Aorta (tissue), 5 donors: ENCODE measurements at regions of chr1 and their contacts with region 1.

Region 1: GRCh38 chr1:220908757-220909156 is 29.5 kb downstream of the HLX start:
- DNase-seq: no peak
- ATAC-seq: no peak
- H3K4me3 ChIP-seq: no peak overlapping the region
- H3K27ac ChIP-seq: no peak overlapping the region
- H3K4me1 ChIP-seq: no peaks in the 10 kb centered on the region
- H3K27me3 ChIP-seq: no peaks in the 10 kb centered on the region

Region 2: GRCh38 chr1:219990782-219991510 is 917.8 kb before region 1 on chr1:
- intact Hi-C with region 1: no loop called
- DNase-seq: no peak
- ATAC-seq: peak; percentile 68
- H3K4me3 ChIP-seq: no peak overlapping the region
- H3K27ac ChIP-seq: no peak overlapping the region
- H3K4me1 ChIP-seq: no peaks in the 10 kb centered on the region
- H3K27me3 ChIP-seq: no peaks in the 10 kb centered on the region

Region 3: GRCh38 chr1:221217029-221217428 is 308.3 kb after region 1 on chr1:
- intact Hi-C with region 1: loop called in 1 of 2 experiments (anchors 10 kb)
- DNase-seq: peak in 1 of 2 donors; percentile 45
- ATAC-seq: peak; percentile 82
- H3K4me3 ChIP-seq: no peak overlapping the region
- H3K27ac ChIP-seq: no peak overlapping the region
- H3K4me1 ChIP-seq: no peaks in the 10 kb centered on the region
- H3K27me3 ChIP-seq: no peaks in the 10 kb centered on the region